ENCODE measurements at regions of chr5 and their contacts with region 1.

Region 1: DNA sequence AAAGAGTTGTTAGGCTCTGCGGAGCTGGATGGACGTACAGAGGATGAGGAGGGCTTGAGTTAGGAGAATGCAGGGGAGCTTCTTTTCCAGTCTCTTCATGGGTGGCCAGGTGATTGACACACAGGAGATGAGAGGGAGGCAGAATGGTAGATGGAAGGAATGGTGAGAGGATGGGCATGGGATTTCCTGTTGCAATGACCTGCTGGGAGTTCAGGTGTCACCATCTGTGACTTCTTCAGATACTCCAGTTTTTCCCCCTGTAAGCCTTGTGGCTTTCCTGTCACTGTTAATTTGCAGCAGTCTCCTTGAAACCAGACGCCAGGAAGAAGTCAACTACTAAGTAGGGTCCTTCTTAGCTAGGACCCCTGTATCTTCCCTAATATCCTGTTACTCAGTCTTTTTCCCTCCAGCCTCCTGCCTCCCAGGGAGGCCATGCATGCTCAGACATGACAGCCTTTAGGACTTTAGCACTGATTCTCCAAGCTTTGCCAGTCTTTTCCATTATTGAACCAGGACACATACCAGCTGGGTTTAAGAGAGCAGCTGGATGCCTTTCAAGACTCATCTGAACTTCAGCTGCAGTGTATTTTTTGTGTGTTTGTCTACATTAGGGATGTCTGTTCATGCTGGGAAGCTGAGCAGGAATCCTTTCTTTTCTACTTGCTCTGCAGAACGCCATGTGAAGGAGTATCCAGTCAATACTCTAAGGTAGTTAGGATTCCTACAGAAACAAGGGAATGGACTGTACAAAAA is 67.2 kb upstream of the CD180 start:
- DNase-seq: no peak
- H3K4me3 ChIP-seq: no peak overlapping the region
- H3K27ac ChIP-seq: no peak overlapping the region
- H3K4me1 ChIP-seq: peaks cover 43% of the 10 kb centered on the region
- H3K27me3 ChIP-seq: no peaks in the 10 kb centered on the region
- CTCF ChIP-seq: no peak

Region 2: GRCh38 chr5:67182301-67182790 is 81.5 kb before region 1 on chr5:
- CTCF ChIA-PET with region 1: no interaction called
- dilution Hi-C with region 1: no loop called
- in situ Hi-C with region 1: no loop called
- intact Hi-C with region 1: no loop called
- DNase-seq: peak; percentile 79
- H3K4me3 ChIP-seq: no peak overlapping the region
- H3K27ac ChIP-seq: no peak overlapping the region
- H3K4me1 ChIP-seq: peaks cover 11% of the 10 kb centered on the region
- H3K27me3 ChIP-seq: no peaks in the 10 kb centered on the region
- CTCF ChIP-seq: no peak

Region 3: GRCh38 chr5:67346611-67347010 is 82.8 kb after region 1 on chr5:
- CTCF ChIA-PET with region 1: no interaction called
- dilution Hi-C with region 1: loop called (anchors 5 kb)
- in situ Hi-C with region 1: no loop called
- intact Hi-C with region 1: no loop called
- DNase-seq: peak; percentile 72
- H3K4me3 ChIP-seq: no peak overlapping the region
- H3K27ac ChIP-seq: no peak overlapping the region
- H3K4me1 ChIP-seq: peaks cover 9% of the 10 kb centered on the region
- H3K27me3 ChIP-seq: no peaks in the 10 kb centered on the region
- CTCF ChIP-seq: no peak